ENCODE measurements at regions of chr22 and their contacts with region 1.

Region 1: DNA sequence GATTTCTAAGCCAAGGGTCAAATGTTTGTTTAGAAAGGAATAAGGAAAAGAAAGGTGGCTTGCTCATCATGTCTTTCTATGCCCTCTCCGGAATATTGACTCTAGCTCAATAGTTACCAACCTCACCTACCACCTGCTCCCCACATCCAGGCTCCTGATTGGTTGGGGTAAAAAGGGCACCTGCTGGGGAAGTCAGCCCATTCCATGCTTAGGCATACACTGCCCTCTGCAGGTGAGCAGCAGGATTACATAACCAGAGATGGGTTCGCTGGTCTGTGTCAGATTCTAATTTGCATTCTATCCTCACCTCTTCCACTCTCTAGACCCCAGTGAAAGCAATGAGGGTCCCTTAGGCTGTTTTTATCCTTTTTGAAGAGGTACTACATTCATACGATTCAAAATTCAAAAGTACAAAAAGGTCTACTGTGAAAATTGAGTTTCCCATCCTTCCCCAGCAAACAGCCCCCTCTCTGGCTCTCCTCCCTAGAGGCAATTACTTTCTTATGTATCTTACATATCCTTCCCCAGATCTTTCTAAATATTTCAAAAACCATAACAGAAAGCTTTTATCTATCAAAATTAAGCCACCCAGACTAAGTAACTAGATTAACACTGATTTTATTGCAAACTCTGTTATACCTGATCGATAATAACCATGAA is 98.0 kb upstream of the ASPHD2 start:
- DNase-seq: peak; percentile 51
- ATAC-seq: peak; percentile 78
- H3K4me3 ChIP-seq: no peak overlapping the region
- H3K27ac ChIP-seq: no peak overlapping the region
- H3K4me1 ChIP-seq: no peaks in the 10 kb centered on the region
- H3K27me3 ChIP-seq: no peaks in the 10 kb centered on the region; the same call in 1 of the 2 replicates
- CTCF ChIP-seq: peak; percentile 84

Region 2: GRCh38 chr22:26172389-26172990 is 158.6 kb before region 1 on chr22:
- CTCF ChIA-PET with region 1: interaction called, 4 read pairs
- POLR2A ChIA-PET with region 1: no interaction called
- in situ Hi-C with region 1: no loop called
- intact Hi-C with region 1: loop called (anchors 10 kb)
- DNase-seq: peak; percentile 13
- ATAC-seq: peak; percentile 81
- H3K4me3 ChIP-seq: no peak overlapping the region
- H3K27ac ChIP-seq: no peak overlapping the region
- H3K4me1 ChIP-seq: no peaks in the 10 kb centered on the region
- H3K27me3 ChIP-seq: no peaks in the 10 kb centered on the region; the same call in none of the 2 replicates
- CTCF ChIP-seq: peak; percentile 83

Region 3: DNA sequence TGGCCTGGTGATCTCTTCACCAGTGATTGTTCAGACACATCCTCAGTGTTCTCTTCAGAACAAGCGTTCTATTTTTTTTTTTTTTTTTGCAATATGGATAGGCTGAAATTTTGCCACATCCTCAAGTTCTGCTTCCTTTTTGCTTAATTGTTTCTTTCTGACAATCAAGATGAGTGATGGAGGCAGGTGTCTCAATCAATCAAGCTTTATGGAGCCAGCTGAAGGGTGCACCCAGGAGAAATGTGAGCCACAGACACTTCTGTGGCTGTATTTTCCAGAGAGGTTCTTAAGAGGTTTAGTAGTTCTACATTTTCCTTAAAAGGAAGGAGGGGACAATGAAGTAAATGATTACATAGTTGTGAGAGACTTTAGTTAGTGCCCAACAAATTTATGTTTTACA is 54.1 kb after region 1 on chr22:
- CTCF ChIA-PET with region 1: no interaction called
- POLR2A ChIA-PET with region 1: no interaction called
- in situ Hi-C with region 1: no loop called
- intact Hi-C with region 1: no loop called
- DNase-seq: no peak
- ATAC-seq: no peak
- H3K4me3 ChIP-seq: no peak overlapping the region
- H3K27ac ChIP-seq: no peak overlapping the region
- H3K4me1 ChIP-seq: no peaks in the 10 kb centered on the region
- H3K27me3 ChIP-seq: peaks cover 8% of the 10 kb centered on the region; the same call in 1 of the 2 replicates
- CTCF ChIP-seq: no peak

Measured in Panc1 (cell line).